ENCODE measurements at regions of chr15 and their contacts with region 1.

Region 1: DNA sequence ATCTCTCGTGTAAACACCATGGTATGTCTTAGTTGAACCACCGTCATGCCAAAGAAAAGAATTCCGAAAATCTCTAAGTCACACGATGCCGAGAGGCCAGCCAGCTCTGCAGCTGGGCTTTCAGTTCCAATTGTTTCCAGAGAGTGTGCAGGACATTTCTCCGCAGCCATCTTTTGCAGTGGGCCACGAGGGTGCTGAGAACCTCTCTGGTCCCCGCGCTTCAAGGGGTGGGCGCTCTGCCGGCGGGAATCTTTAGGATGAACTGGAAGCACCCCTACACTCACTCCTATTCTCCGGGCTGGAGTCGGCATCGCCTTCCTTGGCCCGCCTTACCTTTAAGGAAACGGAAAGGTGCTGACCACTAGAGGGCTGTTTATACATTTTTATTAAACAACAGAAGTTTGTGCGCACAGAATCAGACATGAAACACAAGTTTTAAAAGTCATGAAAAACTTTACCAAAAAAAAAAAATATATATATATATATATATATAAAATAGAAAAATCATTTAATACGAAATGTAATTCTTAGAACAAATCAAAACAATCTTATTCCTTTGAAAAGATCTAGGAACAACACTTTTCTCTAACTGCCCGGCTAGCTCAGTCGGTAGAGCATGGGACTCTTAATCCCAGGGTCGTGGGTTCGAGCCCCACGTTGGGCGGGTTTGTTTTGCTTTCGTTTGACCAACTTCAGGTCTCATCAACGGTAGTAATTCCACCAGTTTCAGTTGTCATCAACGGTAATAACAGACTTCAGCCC is 12.5 kb upstream of the MORF4L1 start:
- DNase-seq: peak in 41 of 42 donors; percentile 10 to 87 (median 67)

Region 2: GRCh38 chr15:78872972-78873792 is 13.0 kb after region 1 on chr15:
- intact Hi-C with region 1: loop called (anchors 1 kb)
- DNase-seq: peak; percentile 66 to 92 (median 82)

Region 3: GRCh38 chr15:78889000-78889399 is 28.8 kb after region 1 on chr15:
- intact Hi-C with region 1: no loop called
- DNase-seq: no peak